Caco-2 (cell line): ENCODE measurements at regions of chr12 and their contacts with region 1.

Region 1: DNA sequence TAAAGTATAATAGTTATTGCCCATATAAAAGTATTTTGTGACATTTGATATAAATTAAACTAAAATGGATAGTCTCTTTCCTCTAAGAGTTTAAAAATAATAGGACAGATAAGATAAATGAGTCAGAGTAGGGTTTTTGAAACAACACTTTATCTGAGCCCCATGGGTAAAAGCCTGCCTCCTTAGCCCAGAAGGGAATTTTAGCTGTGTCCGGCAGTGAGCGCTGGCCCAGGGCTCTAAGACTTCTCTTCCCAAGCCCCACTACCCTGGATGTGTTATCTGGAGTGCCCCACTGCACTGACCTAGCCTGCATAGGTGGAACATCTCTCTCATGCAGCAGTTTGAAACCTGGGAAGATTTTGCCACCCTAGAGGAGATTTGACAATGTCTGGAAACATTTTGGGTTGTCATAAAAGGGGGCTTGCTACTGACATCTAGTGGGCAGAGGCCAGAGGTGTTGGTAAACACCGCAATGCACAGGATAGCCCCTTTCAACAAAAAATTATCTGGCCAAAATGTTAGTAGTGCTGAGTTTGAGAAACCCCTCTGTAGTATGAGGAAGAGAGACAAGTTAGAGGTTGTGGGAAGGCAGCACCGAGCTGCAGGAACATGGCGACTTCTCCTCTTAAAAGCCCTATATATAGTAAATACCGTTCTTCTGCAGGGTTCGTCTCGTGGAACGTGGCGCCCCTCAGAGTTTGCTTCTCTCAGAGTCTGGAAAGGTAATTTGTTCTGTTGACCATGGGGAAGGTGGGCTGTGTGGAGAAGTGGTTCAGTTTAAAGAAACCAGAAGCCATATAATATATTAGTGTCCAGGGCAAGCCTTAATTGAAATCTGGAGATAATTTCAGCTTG is 29.3 kb upstream of the ATF1 start:
- DNase-seq: peak in 1 of 2 experiments; percentile 54
- H3K4me3 ChIP-seq: no peak overlapping the region
- H3K4me3 Mint-ChIP-seq: no peak overlapping the region
- H3K27ac Mint-ChIP-seq: no peak overlapping the region
- H3K4me1 ChIP-seq: peaks cover 8% of the 10 kb centered on the region; the same call in 1 of the 2 replicates
- H3K4me1 Mint-ChIP-seq: peaks cover 6% of the 10 kb centered on the region
- H3K27me3 ChIP-seq: no peaks in the 10 kb centered on the region
- H3K27me3 Mint-ChIP-seq: no peaks in the 10 kb centered on the region
- CTCF ChIP-seq: peak; percentile 67 to 89

Region 2: DNA sequence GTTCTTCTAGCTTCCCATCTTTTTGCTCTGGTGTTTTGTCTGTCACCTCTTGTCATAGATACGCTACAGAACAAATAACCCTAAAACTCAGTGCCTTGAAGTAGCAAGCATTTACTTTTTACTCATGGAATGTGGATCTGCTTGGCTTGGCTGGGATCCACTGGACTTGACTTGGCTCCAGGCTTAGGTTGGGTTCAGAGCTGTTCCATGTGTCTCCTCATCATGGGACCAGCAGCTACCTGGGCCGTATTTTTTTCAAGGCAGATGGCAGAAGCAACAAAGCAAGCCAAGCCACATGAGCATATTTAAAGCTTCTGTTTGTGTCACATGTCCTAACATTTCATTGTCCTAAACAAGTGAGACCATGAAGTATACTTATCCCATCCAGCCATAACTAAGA is 19.5 kb before region 1 on chr12:
- CTCF ChIA-PET with region 1: no interaction called
- POLR2A ChIA-PET with region 1: no interaction called
- intact Hi-C with region 1: no loop called
- DNase-seq: no peak
- H3K4me3 ChIP-seq: no peak overlapping the region
- H3K4me3 Mint-ChIP-seq: no peak overlapping the region
- H3K27ac Mint-ChIP-seq: no peak overlapping the region
- H3K4me1 ChIP-seq: no peaks in the 10 kb centered on the region
- H3K4me1 Mint-ChIP-seq: no peaks in the 10 kb centered on the region
- H3K27me3 ChIP-seq: no peaks in the 10 kb centered on the region
- H3K27me3 Mint-ChIP-seq: no peaks in the 10 kb centered on the region
- CTCF ChIP-seq: no peak

Region 3: DNA sequence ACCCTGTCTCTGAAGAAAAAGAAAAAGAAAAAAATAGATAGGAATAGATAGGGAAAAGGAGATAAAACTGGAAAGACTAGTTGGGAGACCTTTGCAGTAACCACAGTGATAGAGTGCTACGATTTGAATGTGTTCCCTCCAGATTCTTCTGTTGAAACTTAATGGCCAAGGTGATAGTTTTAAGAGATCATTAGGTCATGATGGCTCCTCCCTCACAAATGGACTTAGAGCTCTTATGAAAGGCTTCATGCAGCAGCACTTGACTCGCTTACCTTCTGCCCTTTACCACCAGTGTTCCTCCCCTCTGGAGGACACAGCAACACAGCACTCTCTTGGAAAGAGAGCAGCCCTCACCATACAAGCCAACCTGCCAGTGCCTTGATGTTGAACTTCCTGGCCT is 15.8 kb after region 1 on chr12:
- CTCF ChIA-PET with region 1: no interaction called
- POLR2A ChIA-PET with region 1: interaction called, 10 read pairs
- intact Hi-C with region 1: no loop called
- DNase-seq: no peak
- H3K4me3 ChIP-seq: no peak overlapping the region
- H3K4me3 Mint-ChIP-seq: no peak overlapping the region
- H3K27ac Mint-ChIP-seq: peak overlapping the region; percentile 48
- H3K4me1 ChIP-seq: peaks cover 37% of the 10 kb centered on the region
- H3K4me1 Mint-ChIP-seq: peaks cover 20% of the 10 kb centered on the region
- H3K27me3 ChIP-seq: no peaks in the 10 kb centered on the region
- H3K27me3 Mint-ChIP-seq: no peaks in the 10 kb centered on the region
- CTCF ChIP-seq: no peak

Region 4: DNA sequence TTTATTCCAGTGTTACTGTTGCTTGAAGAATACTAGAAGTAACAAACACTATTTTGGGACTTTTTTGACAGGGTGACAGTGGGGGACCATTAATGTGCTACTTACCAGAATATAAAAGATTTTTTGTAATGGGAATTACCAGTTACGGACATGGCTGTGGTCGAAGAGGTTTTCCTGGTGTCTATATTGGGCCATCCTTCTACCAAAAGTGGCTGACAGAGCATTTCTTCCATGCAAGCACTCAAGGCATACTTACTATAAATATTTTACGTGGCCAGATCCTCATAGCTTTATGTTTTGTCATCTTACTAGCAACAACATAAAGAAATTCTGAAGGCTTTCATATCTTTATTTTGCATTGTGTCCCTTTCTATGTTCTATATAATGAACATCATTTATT is 152.6 kb after region 1 on chr12:
- CTCF ChIA-PET with region 1: interaction called, 13 read pairs
- POLR2A ChIA-PET with region 1: no interaction called
- intact Hi-C with region 1: no loop called
- DNase-seq: no peak
- H3K4me3 ChIP-seq: no peak overlapping the region
- H3K4me3 Mint-ChIP-seq: no peak overlapping the region
- H3K27ac Mint-ChIP-seq: no peak overlapping the region
- H3K4me1 ChIP-seq: no peaks in the 10 kb centered on the region
- H3K4me1 Mint-ChIP-seq: no peaks in the 10 kb centered on the region
- H3K27me3 ChIP-seq: no peaks in the 10 kb centered on the region
- H3K27me3 Mint-ChIP-seq: no peaks in the 10 kb centered on the region
- CTCF ChIP-seq: no peak

Region 5: GRCh38 chr12:51198568-51199365 is 464.1 kb after region 1 on chr12:
- CTCF ChIA-PET with region 1: no interaction called
- POLR2A ChIA-PET with region 1: no interaction called
- intact Hi-C with region 1: no loop called
- DNase-seq: peak; percentile 50 to 52
- H3K4me3 ChIP-seq: no peak overlapping the region
- H3K4me3 Mint-ChIP-seq: no peak overlapping the region
- H3K27ac Mint-ChIP-seq: peak overlapping the region; percentile 43
- H3K4me1 ChIP-seq: peaks cover 11% of the 10 kb centered on the region; the same call in 1 of the 2 replicates
- H3K4me1 Mint-ChIP-seq: peaks cover 21% of the 10 kb centered on the region
- H3K27me3 ChIP-seq: no peaks in the 10 kb centered on the region
- H3K27me3 Mint-ChIP-seq: no peaks in the 10 kb centered on the region
- CTCF ChIP-seq: peak in 1 of 2 experiments; percentile 13